ENCODE measurements at regions of chr20 and their contacts with region 1.

Region 1: GRCh38 chr20:63973636-63974402 is 4.1 kb upstream of the ZNF512B start:
- DNase-seq: peak; percentile 82 to 93 (median 86)
- ATAC-seq: peak; percentile 90
- H3K4me3 ChIP-seq: 0 out of 2 replicates have a peak overlapping the region, but pooled peaks have one; percentile 21
- H3K27ac ChIP-seq: no peak overlapping the region; the same call in 2 of the 3 replicates
- H3K4me1 ChIP-seq: peaks cover 25 to 59% of the 10 kb centered on the region in 2 experiments
- H3K27me3 ChIP-seq: no peaks in the 10 kb centered on the region
- CTCF ChIP-seq: peak; percentile 96 to 98 (median 96)
- EP300 ChIP-seq: peak; percentile 30; the same call in 1 of the 2 replicates
- POLR2A ChIP-seq: no peak
- RAD21 ChIP-seq: peak; percentile 90 to 91

Region 2: DNA sequence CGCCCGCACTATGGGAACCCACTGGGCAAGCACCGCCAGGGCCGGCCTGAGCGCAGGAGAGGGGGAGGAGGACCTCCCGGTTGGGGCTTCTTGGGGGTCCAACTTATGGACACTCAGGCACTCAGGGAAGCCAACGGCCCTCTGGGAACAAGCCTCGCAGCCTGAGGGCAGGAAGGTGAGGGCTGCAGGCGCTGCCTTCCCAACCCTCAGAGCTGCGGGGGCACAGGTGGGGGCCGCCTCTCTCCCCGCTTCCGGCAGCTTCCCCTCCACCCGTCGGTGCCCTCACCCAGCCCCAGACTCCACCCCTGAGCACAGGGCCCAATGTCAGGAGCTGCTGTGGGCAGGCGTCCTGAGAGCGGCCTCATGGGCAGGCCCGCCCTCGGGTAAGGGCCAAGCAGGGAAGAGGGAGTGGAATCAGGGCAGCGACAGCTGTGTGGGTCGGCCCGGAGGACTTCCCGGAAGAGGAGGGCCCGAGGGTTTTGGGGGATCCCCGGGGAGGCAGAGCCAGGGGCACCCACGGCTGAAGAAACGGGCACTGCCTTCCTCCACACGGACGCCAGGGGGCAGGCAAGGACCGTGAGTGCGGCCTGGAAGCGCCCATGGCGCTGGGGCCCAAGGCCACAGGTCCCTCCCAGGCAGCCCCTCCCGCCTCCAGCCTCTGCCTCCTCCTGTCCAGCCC is 436.2 kb before region 1 on chr20:
- CTCF ChIA-PET with region 1: interaction called, 25 read pairs
- POLR2A ChIA-PET with region 1: no interaction called
- in situ Hi-C with region 1: no loop called
- intact Hi-C with region 1: loop called (anchors 2 kb)
- DNase-seq: peak; percentile 90 to 94 (median 92)
- ATAC-seq: peak; percentile 95
- H3K4me3 ChIP-seq: no peak overlapping the region
- H3K27ac ChIP-seq: no peak overlapping the region
- H3K4me1 ChIP-seq: peaks cover 6 to 90% of the 10 kb centered on the region in 2 experiments; a peak in 4 of 5 replicates
- H3K27me3 ChIP-seq: peaks cover 0 to 26% of the 10 kb centered on the region in 2 experiments; a peak in 2 of 5 replicates
- CTCF ChIP-seq: peak; percentile 89 to 95 (median 92)
- EP300 ChIP-seq: no peak
- POLR2A ChIP-seq: no peak
- RAD21 ChIP-seq: peak; percentile 94 to 97

Region 3: GRCh38 chr20:63580796-63581461 is 392.9 kb before region 1 on chr20:
- CTCF ChIA-PET with region 1: interaction called, 3 read pairs
- POLR2A ChIA-PET with region 1: no interaction called
- in situ Hi-C with region 1: no loop called
- intact Hi-C with region 1: loop called (anchors 2 kb)
- DNase-seq: peak; percentile 56 to 68 (median 64)
- ATAC-seq: peak; percentile 89
- H3K4me3 ChIP-seq: no peak overlapping the region
- H3K27ac ChIP-seq: no peak overlapping the region
- H3K4me1 ChIP-seq: peaks cover 4 to 27% of the 10 kb centered on the region in 2 experiments; a peak in 4 of 5 replicates
- H3K27me3 ChIP-seq: peaks cover 0 to 10% of the 10 kb centered on the region in 2 experiments; a peak in 2 of 5 replicates
- CTCF ChIP-seq: peak; percentile 62 to 72 (median 65)
- EP300 ChIP-seq: no peak
- POLR2A ChIP-seq: no peak
- RAD21 ChIP-seq: peak in 1 of 2 experiments; percentile 69; a peak in 3 of 4 replicates

Region 4: GRCh38 chr20:63782051-63782471 is 191.8 kb before region 1 on chr20:
- CTCF ChIA-PET with region 1: interaction called, 3 read pairs
- POLR2A ChIA-PET with region 1: no interaction called
- in situ Hi-C with region 1: no loop called
- intact Hi-C with region 1: loop called (anchors 10 kb)
- DNase-seq: no peak
- ATAC-seq: peak; percentile 48
- H3K4me3 ChIP-seq: no peak overlapping the region
- H3K27ac ChIP-seq: no peak overlapping the region
- H3K4me1 ChIP-seq: peaks cover 5 to 25% of the 10 kb centered on the region in 2 experiments; a peak in 4 of 5 replicates
- H3K27me3 ChIP-seq: no peaks in the 10 kb centered on the region
- CTCF ChIP-seq: peak; percentile 10 to 25 (median 16); a peak in 1 of 6 replicates
- EP300 ChIP-seq: no peak
- POLR2A ChIP-seq: no peak
- RAD21 ChIP-seq: no peak

Region 5: DNA sequence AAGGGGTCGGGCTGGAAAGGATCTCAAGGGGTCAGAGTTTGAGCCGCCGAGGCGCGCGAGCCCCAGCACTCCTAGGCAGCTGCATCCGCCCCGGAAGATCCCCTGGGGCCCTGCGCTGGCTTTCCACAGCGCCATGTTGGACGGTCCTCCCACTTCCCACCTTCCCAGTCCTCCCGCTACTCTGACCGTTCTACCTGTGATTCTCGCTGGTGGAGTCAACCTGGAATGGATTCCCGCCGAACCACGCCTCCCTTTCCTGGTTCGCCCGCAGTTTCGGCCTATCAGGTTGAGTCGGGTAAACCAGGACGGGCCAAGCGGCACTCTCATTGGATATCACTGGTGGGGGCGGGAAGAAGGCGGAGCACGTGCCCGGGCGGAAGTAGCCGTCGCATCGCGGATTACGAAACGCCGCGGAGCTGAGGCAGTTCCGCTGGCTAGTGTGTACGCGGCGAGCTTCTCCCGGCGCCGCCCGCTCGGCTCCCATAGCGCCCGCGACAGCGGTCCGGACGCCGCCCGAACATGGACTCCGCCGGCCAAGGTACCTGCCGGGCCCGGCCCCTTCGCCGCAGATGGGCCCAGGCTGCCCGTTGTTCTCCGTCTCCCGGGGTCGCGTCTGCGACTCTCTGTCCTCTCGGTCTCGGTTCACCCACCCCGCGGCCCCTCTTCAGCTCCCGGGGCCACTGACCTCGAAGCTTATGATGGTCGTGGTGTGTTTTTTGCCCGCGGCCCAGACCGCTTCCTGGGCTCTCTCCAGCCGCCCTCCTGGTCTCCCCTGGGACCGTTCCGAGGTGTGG is 108.8 kb before region 1 on chr20 and contains the start of gene TPD52L2:
- CTCF ChIA-PET with region 1: no interaction called
- POLR2A ChIA-PET with region 1: no interaction called
- in situ Hi-C with region 1: no loop called
- intact Hi-C with region 1: loop called (anchors 10 kb)
- DNase-seq: peak; percentile 94 to 99 (median 97)
- ATAC-seq: peak; percentile 91
- H3K4me3 ChIP-seq: peak within 1 kb of the TSS; percentile 95
- H3K27ac ChIP-seq: peak within 1 kb of the TSS; percentile 89
- H3K4me1 ChIP-seq: peaks cover 9 to 63% of the 10 kb centered on the region in 2 experiments; a peak in 4 of 5 replicates
- H3K27me3 ChIP-seq: no peaks in the 10 kb centered on the region
- CTCF ChIP-seq: no peak
- EP300 ChIP-seq: no peak
- POLR2A ChIP-seq: peak; percentile 91
- RAD21 ChIP-seq: no peak
- polyA plus RNA-seq, gene TPD52L2: 1.9 to 9.3 TPM

Region 6: DNA sequence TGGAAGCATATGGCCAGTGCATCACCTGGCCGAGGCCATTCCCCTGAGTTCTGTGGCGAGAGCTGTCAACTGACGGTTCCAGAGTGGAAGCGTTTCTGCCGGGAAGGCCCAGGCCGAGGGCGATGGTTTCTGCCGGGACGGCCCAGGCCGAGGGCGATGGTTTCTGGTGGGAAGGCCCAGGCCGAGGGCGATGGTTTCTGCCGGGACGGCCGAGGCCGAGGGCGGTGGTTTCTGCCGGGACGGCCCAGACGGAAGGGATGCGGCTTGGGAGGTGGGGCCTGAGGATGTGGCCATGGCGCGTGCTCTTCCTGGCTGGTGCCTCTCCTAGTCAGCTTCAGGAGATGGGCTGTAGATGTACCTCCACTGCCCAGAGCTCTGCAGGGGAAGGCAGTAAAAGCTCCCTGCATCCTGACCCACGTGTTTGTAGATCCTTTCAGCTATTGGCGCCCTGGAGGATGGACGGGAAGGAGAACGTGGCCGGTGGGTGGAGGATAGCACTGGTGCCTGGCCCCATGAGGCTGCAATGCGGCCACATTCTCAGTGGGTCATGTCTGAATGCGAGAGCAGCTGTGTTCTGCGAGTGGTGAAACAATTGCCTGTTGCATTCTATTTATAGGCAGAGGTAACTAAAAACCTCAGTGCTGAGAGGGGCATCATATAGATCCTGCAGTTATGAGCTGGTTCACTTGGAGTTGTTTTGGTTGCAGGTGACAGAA is 95.9 kb before region 1 on chr20:
- CTCF ChIA-PET with region 1: no interaction called
- POLR2A ChIA-PET with region 1: no interaction called
- in situ Hi-C with region 1: no loop called
- intact Hi-C with region 1: no loop called
- DNase-seq: no peak
- ATAC-seq: no peak
- H3K4me3 ChIP-seq: no peak overlapping the region
- H3K27ac ChIP-seq: no peak overlapping the region
- H3K4me1 ChIP-seq: peaks cover 0 to 5% of the 10 kb centered on the region in 2 experiments; a peak in 1 of 5 replicates
- H3K27me3 ChIP-seq: no peaks in the 10 kb centered on the region
- CTCF ChIP-seq: no peak
- EP300 ChIP-seq: no peak
- POLR2A ChIP-seq: no peak
- RAD21 ChIP-seq: no peak

Region 7: GRCh38 chr20:63908008-63908624 is 65.7 kb before region 1 on chr20:
- CTCF ChIA-PET with region 1: interaction called, 3 read pairs
- POLR2A ChIA-PET with region 1: no interaction called
- in situ Hi-C with region 1: no loop called
- intact Hi-C with region 1: loop called (anchors 5 kb)
- DNase-seq: peak in 1 of 4 experiments; percentile 10
- ATAC-seq: 0 out of 3 replicates have a peak, but pooled peaks have one; percentile 33
- H3K4me3 ChIP-seq: no peak overlapping the region
- H3K27ac ChIP-seq: no peak overlapping the region
- H3K4me1 ChIP-seq: peaks cover 0 to 18% of the 10 kb centered on the region in 2 experiments; a peak in 2 of 5 replicates
- H3K27me3 ChIP-seq: no peaks in the 10 kb centered on the region
- CTCF ChIP-seq: no peak
- EP300 ChIP-seq: no peak
- POLR2A ChIP-seq: no peak
- RAD21 ChIP-seq: no peak

Region 8: DNA sequence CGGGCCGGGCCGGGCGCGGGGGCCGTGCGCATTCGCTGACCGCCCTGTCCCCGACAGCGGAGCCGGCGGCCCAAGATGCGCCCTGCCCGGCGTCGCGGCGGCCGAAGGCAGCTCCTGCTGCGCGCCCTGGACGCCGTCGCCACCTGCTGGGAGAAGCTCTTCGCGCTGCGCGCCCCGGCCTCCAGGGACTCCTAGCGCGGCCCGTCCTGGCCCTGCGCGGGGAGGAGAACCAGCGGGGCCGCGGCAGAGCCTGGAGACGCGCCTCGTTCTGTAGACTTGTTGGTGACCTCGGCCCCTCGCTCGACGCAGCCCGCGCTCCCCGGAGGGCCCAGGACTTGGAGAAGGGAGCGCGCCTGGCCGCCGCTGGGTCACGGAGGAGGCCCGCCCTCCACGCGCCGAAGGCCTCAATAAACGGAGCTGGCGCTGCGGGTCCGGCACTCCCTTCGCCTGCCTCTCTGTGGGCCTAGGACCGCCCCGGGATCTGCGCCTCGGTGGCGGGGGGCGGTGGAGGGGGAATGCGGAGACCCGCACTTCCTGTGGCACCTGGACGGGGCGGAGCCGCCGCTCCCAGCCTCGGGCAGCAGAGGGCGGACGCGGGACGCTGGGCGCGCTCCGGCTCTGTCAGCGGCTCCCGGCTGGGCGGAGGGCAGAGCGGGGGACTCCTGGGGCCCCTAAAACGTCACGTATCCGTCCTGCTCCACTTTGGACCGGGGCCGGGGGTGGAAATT is 64.9 kb after region 1 on chr20:
- CTCF ChIA-PET with region 1: no interaction called
- POLR2A ChIA-PET with region 1: no interaction called
- in situ Hi-C with region 1: no loop called
- intact Hi-C with region 1: no loop called
- DNase-seq: peak; percentile 84 to 89 (median 86)
- ATAC-seq: peak; percentile 86
- H3K4me3 ChIP-seq: peak overlapping the region; percentile 51
- H3K27ac ChIP-seq: peak overlapping the region; percentile 83
- H3K4me1 ChIP-seq: peaks cover 33 to 85% of the 10 kb centered on the region in 2 experiments
- H3K27me3 ChIP-seq: no peaks in the 10 kb centered on the region
- CTCF ChIP-seq: peak; percentile 63 to 97 (median 86)
- EP300 ChIP-seq: no peak
- POLR2A ChIP-seq: peak; percentile 37; the same call in 1 of the 2 replicates
- RAD21 ChIP-seq: peak; percentile 60 to 73